Left cardiac atrium (tissue), 4 donors: ENCODE measurements at regions of chr6 and their contacts with region 1.

Region 1: DNA sequence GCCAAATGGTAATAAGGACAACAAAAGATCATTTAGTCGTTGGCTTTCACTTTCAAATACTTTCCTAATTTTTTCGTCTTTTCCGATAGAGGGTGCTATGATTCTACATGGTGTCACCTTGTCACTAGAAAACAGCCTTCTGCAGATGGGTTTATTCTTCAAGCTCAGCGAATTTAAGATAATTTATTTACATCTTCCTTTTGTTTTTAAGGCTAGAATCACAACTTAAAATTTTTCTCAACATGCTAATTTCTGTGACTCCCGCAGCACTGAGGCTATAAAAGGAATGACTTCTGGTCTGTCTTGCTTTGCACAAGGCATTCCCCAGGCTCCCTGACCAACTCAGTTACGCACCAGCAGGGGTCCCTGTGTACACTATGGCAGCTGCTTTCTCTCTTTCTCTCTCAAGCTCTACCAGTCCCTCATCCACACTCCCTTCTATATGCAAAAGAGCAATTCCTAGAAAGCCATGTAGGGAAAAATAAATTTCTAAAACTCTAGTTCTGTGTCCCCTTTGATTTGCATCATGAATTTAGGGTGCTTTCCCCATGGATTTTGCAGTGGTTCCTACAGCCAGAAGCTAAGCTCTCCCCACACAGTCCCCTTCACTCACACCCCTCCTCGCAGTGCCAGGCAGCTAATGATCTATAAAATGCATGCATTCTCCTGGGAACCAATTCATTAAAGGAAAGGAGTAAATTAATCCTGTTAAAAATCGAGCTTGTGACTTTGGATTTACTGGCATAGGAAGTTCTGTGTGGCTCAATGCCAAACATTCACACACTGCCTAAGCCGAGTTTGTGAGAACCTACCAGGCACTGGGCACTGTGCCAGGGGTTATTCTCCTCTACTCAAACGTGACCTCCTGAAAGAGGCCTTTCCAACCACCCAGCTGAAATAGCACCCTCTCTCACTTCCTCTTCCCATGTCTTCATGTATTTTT is 74.5 kb downstream of the DCDC2 start:
- DNase-seq: peak; percentile 77
- ATAC-seq: peak; percentile 89 to 97

Region 2: GRCh38 chr6:24385536-24386269 is 102.4 kb after region 1 on chr6:
- intact Hi-C with region 1: loop called (anchors 5 to 10 kb)
- DNase-seq: no peak
- ATAC-seq: no peak

Region 3: DNA sequence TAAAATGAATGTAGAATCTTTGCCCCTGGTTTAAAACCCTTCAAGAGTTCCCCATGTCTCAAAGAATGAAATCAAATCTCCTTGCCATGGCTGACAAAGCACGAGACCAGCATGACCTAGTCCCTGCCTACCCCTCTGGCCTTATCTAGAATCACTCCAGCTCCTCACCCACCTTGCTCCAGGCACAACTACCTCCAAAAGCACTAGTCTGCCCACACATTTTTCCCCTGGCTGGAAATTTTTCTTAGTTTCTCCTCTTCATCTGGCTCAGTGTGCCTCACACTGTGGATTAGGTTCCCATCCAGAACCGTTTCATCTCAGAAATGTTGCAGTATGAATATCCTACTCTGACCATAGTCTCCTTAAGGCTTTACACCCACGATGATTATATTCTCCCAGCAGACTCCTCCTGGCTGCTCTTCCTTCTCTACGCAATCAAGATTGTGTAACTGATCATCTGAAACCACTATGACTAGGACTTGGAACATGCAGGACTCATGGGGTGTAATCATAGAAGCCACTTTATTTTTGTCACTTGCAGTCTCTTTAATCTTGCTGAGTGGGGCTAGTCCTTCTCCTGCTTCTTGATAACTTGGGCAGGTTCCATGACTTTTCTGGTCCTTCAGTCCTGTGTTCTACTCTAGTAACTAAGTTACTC is 111.6 kb after region 1 on chr6:
- intact Hi-C with region 1: loop called in 1 of 2 experiments (anchors 10 kb)
- DNase-seq: no peak
- ATAC-seq: peak in 1 of 2 donors; percentile 47